ENCODE measurements at regions of chr1 and their contacts with region 1.

Region 1: DNA sequence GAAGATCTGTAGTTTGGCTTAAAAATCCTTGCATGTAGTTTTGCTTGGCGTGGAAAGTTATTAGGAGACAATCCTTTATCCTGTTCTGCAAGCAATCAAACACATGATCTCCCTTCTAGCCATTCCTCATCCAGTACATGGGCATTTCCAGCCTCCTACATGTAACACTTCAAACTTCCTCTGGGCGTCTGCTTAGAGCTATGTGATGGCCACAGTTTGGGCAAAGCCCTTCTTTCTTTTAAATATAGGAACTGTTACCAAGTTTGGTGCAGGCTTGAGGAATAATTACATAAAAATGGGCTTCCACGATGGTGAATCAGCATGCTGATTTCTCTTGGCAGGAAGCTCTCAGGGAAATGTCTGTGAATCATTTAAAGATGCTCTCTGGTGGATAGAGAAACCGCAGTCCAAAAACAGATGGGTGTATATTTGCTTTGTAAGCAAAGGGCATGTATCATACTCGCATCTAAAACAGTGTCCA is 176.9 kb upstream of the FMN2 start:
- DNase-seq: no peak
- H3K4me3 Mint-ChIP-seq: no peak overlapping the region
- H3K27ac Mint-ChIP-seq: no peak overlapping the region
- H3K4me1 Mint-ChIP-seq: no peaks in the 10 kb centered on the region
- H3K27me3 Mint-ChIP-seq: no peaks in the 10 kb centered on the region
- CTCF ChIP-seq: no peak

Region 2: DNA sequence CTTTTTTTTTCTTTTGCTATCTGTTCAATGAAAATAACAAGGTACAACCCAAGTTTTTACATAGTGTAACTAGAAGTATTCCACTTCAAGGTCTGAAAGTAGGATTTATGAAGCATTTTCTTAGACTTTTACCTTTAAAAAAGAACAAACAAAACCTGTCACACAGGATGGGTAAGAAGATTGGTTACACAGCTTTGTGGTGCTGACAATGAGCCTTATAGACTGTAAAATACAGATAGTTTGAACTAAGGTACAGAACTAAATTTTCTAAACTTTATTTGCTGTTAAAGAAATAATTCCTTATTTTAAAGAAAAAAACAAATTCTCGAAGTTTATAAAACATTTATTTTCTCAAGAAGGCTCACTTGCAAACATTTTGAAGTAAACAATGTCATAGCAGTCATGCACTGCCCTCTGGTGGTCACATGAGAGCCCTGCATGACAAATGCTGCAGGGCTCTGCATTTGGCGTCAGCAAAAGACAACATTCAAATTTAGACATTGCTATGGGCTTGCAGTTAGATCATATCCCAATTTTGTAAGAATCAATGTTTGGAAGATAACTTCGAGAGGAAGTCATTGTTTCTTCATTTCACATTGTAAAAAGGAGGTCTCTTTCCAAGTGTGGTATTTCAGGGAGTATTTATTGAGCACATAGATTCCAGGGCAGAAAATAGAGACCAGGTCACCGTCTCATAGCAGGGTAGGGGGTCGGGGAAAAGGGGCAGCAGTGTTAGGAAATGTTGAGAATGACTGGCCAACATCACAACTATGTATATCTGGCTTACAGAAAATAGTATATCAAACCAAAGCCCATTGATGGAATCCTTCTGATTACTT is 61.6 kb after region 1 on chr1:
- CTCF ChIA-PET with region 1: no interaction called
- intact Hi-C with region 1: loop called (anchors 5 kb)
- DNase-seq: peak; percentile 73
- H3K4me3 Mint-ChIP-seq: no peak overlapping the region
- H3K27ac Mint-ChIP-seq: no peak overlapping the region
- H3K4me1 Mint-ChIP-seq: no peaks in the 10 kb centered on the region
- H3K27me3 Mint-ChIP-seq: peaks cover 11% of the 10 kb centered on the region
- CTCF ChIP-seq: peak; percentile 95